ENCODE measurements at regions of chr11 and their contacts with region 1.

Region 1: DNA sequence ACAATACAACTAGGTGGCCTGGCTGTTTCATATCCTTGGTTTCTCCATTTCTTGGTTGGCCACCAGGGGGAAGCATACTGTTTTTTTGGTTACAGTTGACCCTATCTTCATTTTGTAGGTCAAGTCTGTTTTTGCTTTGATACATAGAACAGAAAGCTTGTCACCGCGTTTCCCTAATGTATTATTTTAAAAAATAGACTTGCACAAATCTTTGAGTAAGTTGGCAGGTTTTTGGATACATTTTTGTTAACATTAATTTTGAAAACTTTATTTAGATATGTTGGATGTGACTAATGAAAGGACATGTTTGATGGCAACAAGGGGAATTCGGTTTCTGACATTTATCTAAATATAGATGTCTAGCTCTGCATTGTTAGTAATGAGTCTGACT is 3.0 kb downstream of the NCR3LG1 start:
- DNase-seq: peak; percentile 81
- H3K4me3 Mint-ChIP-seq: peak overlapping the region; percentile 70
- H3K27ac Mint-ChIP-seq: no peak overlapping the region
- H3K4me1 Mint-ChIP-seq: peaks cover 12% of the 10 kb centered on the region
- H3K27me3 Mint-ChIP-seq: no peaks in the 10 kb centered on the region
- CTCF ChIP-seq: peak; percentile 38

Region 2: GRCh38 chr11:17230867-17231851 is 123.4 kb before region 1 on chr11:
- CTCF ChIA-PET with region 1: interaction called, 6 read pairs
- intact Hi-C with region 1: loop called (anchors 5 kb)
- DNase-seq: no peak
- H3K4me3 Mint-ChIP-seq: no peak overlapping the region
- H3K27ac Mint-ChIP-seq: no peak overlapping the region
- H3K4me1 Mint-ChIP-seq: no peaks in the 10 kb centered on the region
- H3K27me3 Mint-ChIP-seq: no peaks in the 10 kb centered on the region
- CTCF ChIP-seq: no peak

Region 3: GRCh38 chr11:17366495-17366894 is 11.9 kb after region 1 on chr11:
- CTCF ChIA-PET with region 1: interaction called, 17 read pairs
- intact Hi-C with region 1: no loop called
- DNase-seq: no peak
- H3K4me3 Mint-ChIP-seq: no peak overlapping the region
- H3K27ac Mint-ChIP-seq: no peak overlapping the region
- H3K4me1 Mint-ChIP-seq: no peaks in the 10 kb centered on the region
- H3K27me3 Mint-ChIP-seq: no peaks in the 10 kb centered on the region
- CTCF ChIP-seq: no peak

Region 4: GRCh38 chr11:17405232-17406005 is 50.8 kb after region 1 on chr11:
- CTCF ChIA-PET with region 1: no interaction called
- intact Hi-C with region 1: no loop called
- DNase-seq: peak; percentile 60
- H3K4me3 Mint-ChIP-seq: peak overlapping the region; percentile 26
- H3K27ac Mint-ChIP-seq: no peak overlapping the region
- H3K4me1 Mint-ChIP-seq: peaks cover 9% of the 10 kb centered on the region
- H3K27me3 Mint-ChIP-seq: peaks cover 1% of the 10 kb centered on the region
- CTCF ChIP-seq: no peak

Region 5: GRCh38 chr11:17528181-17528691 is 173.6 kb after region 1 on chr11:
- CTCF ChIA-PET with region 1: interaction called, 19 read pairs
- intact Hi-C with region 1: no loop called
- DNase-seq: peak; percentile 76
- H3K4me3 Mint-ChIP-seq: no peak overlapping the region
- H3K27ac Mint-ChIP-seq: no peak overlapping the region
- H3K4me1 Mint-ChIP-seq: no peaks in the 10 kb centered on the region
- H3K27me3 Mint-ChIP-seq: no peaks in the 10 kb centered on the region
- CTCF ChIP-seq: peak; percentile 42

Measured in Calu3 (cell line).